Uterus (tissue), 4 donors: ENCODE measurements at regions of chr6 and their contacts with region 1.

Region 1: GRCh38 chr6:118784641-118785164 is 109.2 kb upstream of the ASF1A start:
- DNase-seq: peak; percentile 52 to 60
- H3K4me3 ChIP-seq: no peak overlapping the region
- H3K27ac ChIP-seq: peak overlapping the region; percentile 17 to 61
- H3K4me1 ChIP-seq: no peaks in the 10 kb centered on the region
- H3K27me3 ChIP-seq: no peaks in the 10 kb centered on the region
- CTCF ChIP-seq: no peak
- POLR2A ChIP-seq: no peak

Region 2: DNA sequence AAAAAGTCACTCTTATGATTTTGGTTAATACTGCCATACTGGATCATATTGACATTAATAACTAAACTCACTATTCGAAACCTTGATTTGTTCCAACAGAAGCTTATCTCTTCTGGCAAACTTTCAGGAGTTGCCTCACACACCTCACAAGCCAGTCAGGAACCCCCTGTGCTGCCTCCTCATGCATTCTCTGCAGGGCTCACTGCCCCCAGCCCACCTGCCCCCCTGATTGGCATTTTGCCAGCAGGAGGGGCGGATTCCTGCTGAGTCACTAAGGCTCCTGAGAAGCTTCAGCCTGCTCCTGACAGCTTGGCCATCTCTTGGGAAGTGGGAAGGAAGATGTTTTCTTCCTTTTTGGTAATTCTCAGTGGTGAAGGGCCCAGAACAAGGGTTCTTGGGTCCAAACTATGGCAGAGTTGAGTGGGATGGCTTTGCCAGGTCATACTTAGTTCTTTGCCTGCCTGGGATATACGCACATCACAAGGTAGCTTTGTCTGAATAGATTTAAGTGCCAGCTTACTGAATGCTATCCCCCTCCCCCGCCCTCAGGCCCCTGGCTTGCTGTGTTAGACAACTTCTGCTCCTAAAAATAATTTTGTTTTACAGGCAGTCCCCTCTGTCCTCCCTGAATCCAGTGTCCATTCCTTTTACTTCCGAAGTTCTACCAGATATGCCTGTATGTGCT is 846.2 kb before region 1 on chr6:
- intact Hi-C with region 1: loop called (anchors 5 kb)
- DNase-seq: peak; percentile 25 to 26
- H3K4me3 ChIP-seq: no peak overlapping the region
- H3K27ac ChIP-seq: peak overlapping the region; percentile 30 to 54
- H3K4me1 ChIP-seq: no peaks in the 10 kb centered on the region
- H3K27me3 ChIP-seq: no peaks in the 10 kb centered on the region
- CTCF ChIP-seq: no peak
- POLR2A ChIP-seq: no peak